ENCODE measurements at regions of chr18 and their contacts with region 1.

Region 1: DNA sequence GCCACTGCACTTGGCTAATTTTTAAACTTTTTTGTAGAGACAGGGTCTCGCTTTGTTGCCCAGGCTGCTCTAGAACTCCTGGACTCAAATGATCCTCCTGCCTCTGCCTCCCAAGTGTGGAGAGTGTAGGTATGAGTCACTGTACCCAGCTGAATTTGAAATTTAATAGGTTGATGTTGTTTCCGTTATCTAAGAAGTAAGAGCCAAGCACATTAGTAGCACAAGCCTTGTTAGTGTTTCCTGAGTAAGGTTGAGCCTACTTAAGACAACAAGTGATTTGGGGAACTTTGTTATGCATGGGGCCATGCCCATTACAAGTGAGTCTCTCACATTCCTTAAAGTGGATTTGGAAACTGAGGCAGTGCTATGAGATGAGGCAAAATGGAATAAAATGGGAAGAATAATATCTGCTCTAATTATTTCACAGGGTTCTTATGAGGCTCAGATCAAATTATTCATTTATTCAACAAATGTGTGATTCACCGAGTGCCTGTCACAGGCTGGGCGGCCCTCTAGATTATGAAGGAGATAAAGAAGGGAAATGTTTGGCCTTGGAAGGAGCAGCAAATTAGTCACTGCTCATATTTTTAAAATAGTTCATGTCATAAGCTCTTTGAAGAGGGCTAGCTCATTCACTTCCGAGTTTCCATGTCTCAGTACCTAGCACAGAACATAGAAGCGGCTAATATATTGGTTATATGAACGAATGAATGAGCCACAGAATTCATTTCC is 217.2 kb downstream of the LDLRAD4 start:
- DNase-seq: no peak
- ATAC-seq: no peak
- H3K4me3 ChIP-seq: no peak overlapping the region
- H3K4me3 Mint-ChIP-seq: peak overlapping the region in 8 of 10 donors; percentile 12 to 91 (median 31)
- H3K27ac ChIP-seq: no peak overlapping the region
- H3K27ac Mint-ChIP-seq: peak overlapping the region in 8 of 9 donors; percentile 6 to 95 (median 92)
- H3K4me1 ChIP-seq: peaks cover 12 to 43% of the 10 kb centered on the region in 2 donors
- H3K4me1 Mint-ChIP-seq: peaks cover 31 to 65% (median 57%) of the 10 kb centered on the region in 7 donors
- H3K27me3 ChIP-seq: no peaks in the 10 kb centered on the region
- H3K27me3 Mint-ChIP-seq: no peaks in the 10 kb centered on the region

Region 2: GRCh38 chr18:13268158-13269012 is 167.4 kb before region 1 on chr18:
- CTCF ChIA-PET with region 1: no interaction called
- POLR2A ChIA-PET with region 1: interaction called, 3 read pairs
- intact Hi-C with region 1: loop called in 1 of 2 experiments (anchors 5 kb)
- DNase-seq: no peak
- ATAC-seq: no peak
- H3K4me3 ChIP-seq: no peak overlapping the region
- H3K4me3 Mint-ChIP-seq: peak overlapping the region in 8 of 10 donors; percentile 3 to 68 (median 26)
- H3K27ac ChIP-seq: no peak overlapping the region
- H3K27ac Mint-ChIP-seq: peak overlapping the region in 8 of 9 donors; percentile 65 to 89 (median 83)
- H3K4me1 ChIP-seq: peaks cover 0 to 49% of the 10 kb centered on the region in 2 donors
- H3K4me1 Mint-ChIP-seq: peaks cover 24 to 84% (median 65%) of the 10 kb centered on the region in 7 donors
- H3K27me3 ChIP-seq: no peaks in the 10 kb centered on the region
- H3K27me3 Mint-ChIP-seq: peaks cover 0 to 4% (median 0%) of the 10 kb centered on the region in 5 donors

Region 3: GRCh38 chr18:13422541-13423147 is 13.1 kb before region 1 on chr18:
- CTCF ChIA-PET with region 1: no interaction called
- POLR2A ChIA-PET with region 1: no interaction called
- intact Hi-C with region 1: loop called in 1 of 2 experiments (anchors 1 kb)
- DNase-seq: no peak
- ATAC-seq: no peak
- H3K4me3 ChIP-seq: no peak overlapping the region
- H3K4me3 Mint-ChIP-seq: no peak overlapping the region
- H3K27ac ChIP-seq: no peak overlapping the region
- H3K27ac Mint-ChIP-seq: peak overlapping the region in 3 of 9 donors; percentile 0 to 83 (median 37)
- H3K4me1 ChIP-seq: peaks cover 0 to 18% of the 10 kb centered on the region in 2 donors
- H3K4me1 Mint-ChIP-seq: peaks cover 12 to 48% (median 42%) of the 10 kb centered on the region in 7 donors
- H3K27me3 ChIP-seq: no peaks in the 10 kb centered on the region
- H3K27me3 Mint-ChIP-seq: no peaks in the 10 kb centered on the region

Region 4: DNA sequence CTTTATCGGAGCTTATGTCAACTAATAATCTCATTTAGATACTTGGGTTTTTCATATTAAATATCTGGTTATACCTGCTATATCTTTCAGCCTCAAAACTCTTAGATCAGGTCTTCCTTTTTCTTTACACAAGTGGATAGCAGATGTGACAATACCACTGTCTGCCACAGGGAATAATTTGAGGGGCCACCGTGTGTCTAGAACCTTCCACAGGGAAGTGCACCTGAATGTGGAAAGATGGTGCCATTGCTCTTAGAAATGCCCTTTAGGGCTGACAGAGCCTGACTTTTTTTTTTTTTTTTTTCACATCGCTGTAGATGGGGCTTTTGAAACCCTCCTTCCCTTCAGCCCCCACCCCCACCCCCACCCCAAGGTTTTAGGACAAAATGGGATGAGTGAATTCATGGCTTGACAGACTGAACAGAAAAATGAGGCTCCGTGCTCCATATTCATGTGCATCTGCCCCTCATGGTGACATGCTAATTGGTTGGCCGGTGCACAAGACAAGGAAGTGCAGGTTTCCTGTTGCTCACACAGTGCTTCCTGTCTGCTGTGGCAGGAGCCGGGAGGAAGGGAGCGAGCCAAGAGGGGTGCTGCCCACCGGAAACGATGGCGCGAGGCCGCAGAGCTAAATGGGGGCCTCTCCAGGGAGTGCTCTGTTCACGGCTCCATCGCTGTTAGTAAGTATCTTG is 28.8 kb after region 1 on chr18:
- CTCF ChIA-PET with region 1: interaction called, 3 read pairs
- POLR2A ChIA-PET with region 1: interaction called, 3 read pairs
- intact Hi-C with region 1: loop called (anchors 1 kb)
- DNase-seq: peak; percentile 37 to 70 (median 64)
- ATAC-seq: peak; percentile 93
- H3K4me3 ChIP-seq: peak overlapping the region; percentile 66
- H3K4me3 Mint-ChIP-seq: peak overlapping the region; percentile 87 to 100 (median 94)
- H3K27ac ChIP-seq: peak overlapping the region; percentile 66
- H3K27ac Mint-ChIP-seq: peak overlapping the region; percentile 88 to 99 (median 95)
- H3K4me1 ChIP-seq: peaks cover 16 to 45% of the 10 kb centered on the region in 2 donors
- H3K4me1 Mint-ChIP-seq: peaks cover 43 to 85% (median 83%) of the 10 kb centered on the region in 7 donors
- H3K27me3 ChIP-seq: no peaks in the 10 kb centered on the region
- H3K27me3 Mint-ChIP-seq: no peaks in the 10 kb centered on the region

Region 5: DNA sequence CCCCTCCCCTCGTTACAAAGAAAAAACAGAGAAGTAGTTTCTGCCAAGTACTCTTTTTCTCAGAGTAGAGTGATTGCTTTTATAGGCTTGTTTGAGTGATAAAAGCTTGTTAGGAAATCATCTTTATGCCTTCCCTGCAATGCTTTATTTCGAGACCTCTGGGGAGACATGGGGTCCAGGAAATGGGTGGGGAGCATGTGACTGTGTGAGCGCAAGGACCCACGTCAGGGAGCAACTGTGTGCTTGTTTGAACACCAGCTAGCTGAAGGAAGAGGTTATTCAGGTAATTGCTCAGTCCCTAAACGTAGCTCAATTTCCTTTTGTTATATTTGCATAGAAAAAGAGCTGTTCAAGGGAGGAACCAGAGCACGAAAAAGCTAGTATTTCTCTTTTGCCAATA is 103.3 kb after region 1 on chr18:
- CTCF ChIA-PET with region 1: no interaction called
- POLR2A ChIA-PET with region 1: no interaction called
- intact Hi-C with region 1: loop called in 1 of 2 experiments (anchors 5 kb)
- DNase-seq: peak in 7 of 9 donors; percentile 68 to 86 (median 79)
- ATAC-seq: peak; percentile 92
- H3K4me3 ChIP-seq: no peak overlapping the region
- H3K4me3 Mint-ChIP-seq: peak overlapping the region; percentile 70 to 85 (median 74)
- H3K27ac ChIP-seq: peak overlapping the region; percentile 66
- H3K27ac Mint-ChIP-seq: peak overlapping the region; percentile 64 to 97 (median 90)
- H3K4me1 ChIP-seq: peaks cover 11 to 36% of the 10 kb centered on the region in 2 donors
- H3K4me1 Mint-ChIP-seq: peaks cover 28 to 80% (median 70%) of the 10 kb centered on the region in 7 donors
- H3K27me3 ChIP-seq: no peaks in the 10 kb centered on the region
- H3K27me3 Mint-ChIP-seq: no peaks in the 10 kb centered on the region